PC-9 (cell line): ENCODE measurements at regions of chr20 and their contacts with region 1.

Region 1: GRCh38 chr20:9565910-9566550 is 51.6 kb downstream of the LAMP5 start:
- DNase-seq: no peak
- H3K4me3 ChIP-seq: no peak overlapping the region
- H3K27ac ChIP-seq: no peak overlapping the region
- H3K4me1 ChIP-seq: no peaks in the 10 kb centered on the region
- H3K27me3 ChIP-seq: peaks cover 42% of the 10 kb centered on the region
- CTCF ChIP-seq: no peak

Region 2: DNA sequence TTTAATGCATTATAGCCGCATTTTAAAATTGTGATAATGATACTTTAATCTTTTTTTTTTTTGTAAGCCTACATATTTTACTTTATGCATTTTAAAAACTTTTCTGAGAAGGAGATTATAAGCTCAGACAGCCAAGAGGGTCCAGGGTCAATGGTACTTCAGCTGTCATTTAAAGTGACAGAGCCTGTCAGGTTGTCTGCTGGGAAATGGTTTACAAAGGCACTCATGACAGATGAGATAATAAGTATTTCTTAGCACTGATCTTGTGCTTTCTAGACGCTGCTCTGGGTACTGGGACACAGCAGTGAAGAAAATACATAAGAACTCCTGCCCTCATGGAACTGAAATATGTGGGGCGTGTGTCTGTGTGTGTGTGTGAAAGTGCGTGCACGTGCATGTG is 32.0 kb before region 1 on chr20:
- CTCF ChIA-PET with region 1: no interaction called
- POLR2A ChIA-PET with region 1: interaction called, 11 read pairs
- intact Hi-C with region 1: no loop called
- DNase-seq: no peak
- H3K4me3 ChIP-seq: no peak overlapping the region
- H3K27ac ChIP-seq: no peak overlapping the region
- H3K4me1 ChIP-seq: no peaks in the 10 kb centered on the region
- H3K27me3 ChIP-seq: peaks cover 33% of the 10 kb centered on the region
- CTCF ChIP-seq: no peak

Region 3: DNA sequence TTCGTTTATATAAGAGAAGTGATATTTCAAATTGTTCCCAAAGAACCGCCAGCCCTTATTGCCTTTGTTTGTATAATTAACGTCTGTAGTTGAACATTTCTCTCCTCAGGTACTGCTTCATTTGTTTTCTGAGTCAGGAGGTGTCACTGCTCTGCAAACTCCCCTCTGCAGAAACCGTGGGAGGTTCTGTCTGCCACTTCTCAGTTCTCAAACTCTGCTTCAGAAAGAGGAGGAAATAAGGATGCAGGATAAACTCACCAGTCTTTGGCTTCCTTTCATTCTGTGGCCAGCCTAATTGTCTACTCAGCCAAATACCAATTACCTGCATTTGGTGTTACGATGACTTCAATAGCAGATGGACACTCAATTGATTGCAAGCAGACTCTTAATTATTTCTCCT is 123.0 kb after region 1 on chr20:
- CTCF ChIA-PET with region 1: no interaction called
- POLR2A ChIA-PET with region 1: no interaction called
- intact Hi-C with region 1: no loop called
- DNase-seq: no peak
- H3K4me3 ChIP-seq: no peak overlapping the region
- H3K27ac ChIP-seq: no peak overlapping the region
- H3K4me1 ChIP-seq: no peaks in the 10 kb centered on the region
- H3K27me3 ChIP-seq: no peaks in the 10 kb centered on the region
- CTCF ChIP-seq: no peak